GM13976 (cell line): ENCODE measurements at regions of chr13 and their contacts with region 1.

Region 1: GRCh38 chr13:36275190-36276002 is 22.2 kb downstream of the CCDC169 start:
- DNase-seq: peak; percentile 22
- CTCF ChIP-seq: peak; percentile 17

Region 2: GRCh38 chr13:35978603-35979316 is 296.6 kb before region 1 on chr13:
- in situ Hi-C with region 1: loop called (anchors 10 kb)
- DNase-seq: peak; percentile 56
- CTCF ChIP-seq: peak; percentile 44